ENCODE measurements at regions of chr3 and their contacts with region 1.

Region 1: GRCh38 chr3:66021731-66022141 is 17.0 kb downstream of the MAGI1 start:
- DNase-seq: peak; percentile 77
- H3K4me3 ChIP-seq: peak overlapping the region; percentile 31 to 59 (median 49)
- H3K27ac ChIP-seq: peak overlapping the region; percentile 78
- H3K4me1 ChIP-seq: peaks cover 28% of the 10 kb centered on the region
- H3K27me3 ChIP-seq: no peaks in the 10 kb centered on the region
- CTCF ChIP-seq: no peak

Region 2: DNA sequence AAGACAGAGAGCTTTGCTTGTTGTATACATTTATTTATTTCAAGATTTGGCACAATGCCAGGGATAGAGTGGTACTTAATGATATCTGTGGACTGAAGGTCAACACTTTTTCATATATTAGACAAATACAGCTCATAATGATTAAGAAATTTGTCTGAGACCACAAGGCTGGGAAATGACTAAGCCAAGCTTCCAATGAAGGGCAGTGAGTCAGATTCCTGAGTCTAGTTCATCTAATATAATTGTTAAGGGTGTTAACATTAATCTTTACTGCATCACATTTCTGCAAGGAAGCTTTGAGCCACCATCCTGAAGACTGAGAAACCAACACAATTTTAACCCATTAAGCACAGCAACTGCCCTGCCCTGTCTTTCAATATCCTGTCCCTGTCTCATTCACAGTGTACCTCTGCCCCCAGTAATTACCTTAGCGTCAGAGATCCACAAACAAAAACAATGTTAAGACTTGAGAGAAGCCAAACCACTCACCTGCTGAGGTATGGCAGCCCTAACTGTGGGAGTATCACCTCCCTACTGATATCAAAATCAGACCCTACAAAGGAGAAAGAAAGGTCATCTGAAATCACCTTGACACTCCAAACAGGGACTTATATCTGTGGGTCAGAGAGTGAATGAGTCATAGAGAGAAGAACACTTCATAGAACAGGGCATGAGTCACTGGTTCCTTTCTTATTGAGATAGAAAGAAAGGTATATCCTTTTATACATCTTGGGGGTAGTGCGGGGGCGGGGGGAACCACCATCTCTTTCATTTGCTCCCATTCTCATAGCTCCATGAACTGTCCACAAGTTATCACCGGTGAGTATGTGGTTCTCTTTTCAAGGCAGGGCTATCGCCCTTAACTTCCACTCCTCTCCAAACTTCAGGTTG is 57.7 kb before region 1 on chr3:
- CTCF ChIA-PET with region 1: no interaction called
- dilution Hi-C with region 1: no loop called
- in situ Hi-C with region 1: no loop called
- intact Hi-C with region 1: loop called (anchors 2 kb)
- DNase-seq: peak; percentile 91
- H3K4me3 ChIP-seq: peak overlapping the region in 1 of 3 experiments; percentile 4
- H3K27ac ChIP-seq: peak overlapping the region; percentile 71
- H3K4me1 ChIP-seq: peaks cover 17% of the 10 kb centered on the region
- H3K27me3 ChIP-seq: no peaks in the 10 kb centered on the region
- CTCF ChIP-seq: no peak

Region 3: DNA sequence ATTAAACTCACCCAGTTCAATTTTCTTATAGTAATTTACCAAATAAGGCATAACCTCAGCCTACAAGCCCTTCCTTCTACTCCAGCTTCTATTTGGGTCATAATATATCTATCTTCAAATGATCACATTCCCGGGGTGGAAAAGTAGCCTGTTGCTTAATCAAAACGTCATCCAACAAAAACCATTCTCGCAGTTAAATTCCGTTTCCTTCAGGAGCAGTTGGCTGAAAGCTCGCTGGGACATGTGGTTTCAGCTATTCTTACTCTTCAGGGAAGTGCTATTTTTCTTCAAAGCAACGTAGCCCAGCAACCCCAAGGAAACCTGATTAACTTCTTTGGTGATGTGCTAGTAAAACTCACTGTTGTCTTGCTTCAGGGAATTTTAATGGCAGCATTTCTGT is 42.6 kb before region 1 on chr3:
- CTCF ChIA-PET with region 1: no interaction called
- dilution Hi-C with region 1: loop called (anchors 5 kb)
- in situ Hi-C with region 1: no loop called
- intact Hi-C with region 1: no loop called
- DNase-seq: peak; percentile 19
- H3K4me3 ChIP-seq: no peak overlapping the region
- H3K27ac ChIP-seq: no peak overlapping the region
- H3K4me1 ChIP-seq: no peaks in the 10 kb centered on the region
- H3K27me3 ChIP-seq: no peaks in the 10 kb centered on the region
- CTCF ChIP-seq: no peak

Region 4: DNA sequence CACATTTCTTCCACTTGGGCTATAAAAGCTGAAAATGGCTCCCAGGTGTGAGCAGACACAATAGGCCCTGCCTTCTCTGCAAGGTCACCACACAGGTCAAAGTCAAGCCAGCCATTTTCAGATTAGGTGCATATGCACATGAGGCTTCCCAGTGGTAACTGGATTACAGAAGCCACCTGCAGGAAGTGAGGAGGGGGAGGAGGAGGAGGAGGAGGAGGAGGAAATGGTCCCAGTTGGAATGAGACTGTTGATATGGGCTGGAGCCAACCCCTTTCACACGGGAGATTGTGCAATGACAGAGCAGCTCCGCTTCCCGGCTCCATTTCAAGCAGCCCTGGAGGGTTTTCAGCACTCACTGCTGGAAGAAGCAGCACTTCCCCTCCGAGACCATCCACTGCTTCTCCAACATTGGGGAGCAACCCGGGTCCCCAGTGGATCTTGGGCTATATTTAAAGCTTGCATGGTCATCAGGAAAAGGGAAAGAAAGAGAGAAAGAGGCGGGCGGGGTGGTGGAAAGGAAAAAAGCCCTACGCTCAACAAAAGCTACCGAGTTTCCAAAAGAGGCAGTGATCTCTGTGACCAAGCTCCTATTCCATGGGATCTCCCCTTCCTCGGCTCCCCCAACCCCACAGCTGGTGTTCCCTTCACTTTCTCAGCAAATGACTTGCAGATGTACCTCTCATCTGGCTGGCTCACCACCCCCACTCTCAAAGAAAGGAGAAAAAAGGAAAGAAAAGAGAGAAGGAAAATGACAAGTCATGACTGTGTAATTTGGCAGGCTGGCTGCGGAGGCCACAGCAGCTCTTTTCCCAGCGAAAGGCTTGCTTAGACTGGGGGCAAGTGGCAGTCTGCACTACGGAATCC is 420.8 kb after region 1 on chr3:
- CTCF ChIA-PET with region 1: no interaction called
- dilution Hi-C with region 1: no loop called
- in situ Hi-C with region 1: no loop called
- intact Hi-C with region 1: no loop called
- DNase-seq: peak; percentile 41
- H3K4me3 ChIP-seq: no peak overlapping the region
- H3K27ac ChIP-seq: peak overlapping the region; percentile 33
- H3K4me1 ChIP-seq: peaks cover 37% of the 10 kb centered on the region
- H3K27me3 ChIP-seq: no peaks in the 10 kb centered on the region
- CTCF ChIP-seq: no peak